ENCODE measurements at regions of chr11 and their contacts with region 1.

Region 1: GRCh38 chr11:134098566-134099184 is 29.8 kb downstream of the JAM3 start:
- DNase-seq: no peak
- ATAC-seq: peak; percentile 98
- H3K4me3 Mint-ChIP-seq: no peak overlapping the region
- H3K27ac Mint-ChIP-seq: 0 out of 2 replicates have a peak overlapping the region, but pooled peaks have one; percentile 50
- H3K4me1 Mint-ChIP-seq: peaks cover 23% of the 10 kb centered on the region
- H3K27me3 Mint-ChIP-seq: peaks cover 8% of the 10 kb centered on the region
- CTCF ChIP-seq: no peak

Region 2: DNA sequence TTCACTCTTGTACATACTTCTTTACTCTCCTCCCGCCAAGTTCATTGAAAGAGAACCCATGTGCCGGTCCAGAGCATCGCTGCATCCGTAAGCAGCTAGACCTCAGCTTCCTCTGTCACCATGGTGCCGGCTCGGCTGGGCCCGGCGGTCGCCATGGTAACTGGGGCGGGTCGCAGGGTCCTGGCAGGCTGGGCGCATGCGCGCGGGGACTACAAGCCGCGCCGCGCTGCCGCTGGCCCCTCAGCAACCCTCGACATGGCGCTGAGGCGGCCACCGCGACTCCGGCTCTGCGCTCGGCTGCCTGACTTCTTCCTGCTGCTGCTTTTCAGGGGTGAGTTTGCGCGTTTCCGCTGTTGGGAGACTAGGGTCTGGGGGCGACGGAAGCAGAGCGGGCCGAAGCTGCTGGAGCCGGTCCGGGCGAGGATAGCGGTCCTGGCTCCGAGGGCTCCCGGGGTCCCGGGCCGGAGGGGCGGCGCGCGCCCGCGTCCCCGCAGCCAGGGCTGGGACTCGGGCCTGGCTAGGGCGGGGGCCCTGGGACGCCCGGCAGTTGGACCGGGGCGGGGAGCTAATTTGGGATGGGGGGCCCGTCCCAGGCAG is 29.7 kb before region 1 on chr11 and contains the start of gene JAM3:
- CTCF ChIA-PET with region 1: interaction called, 15 read pairs
- POLR2A ChIA-PET with region 1: no interaction called
- DNase-seq: peak; percentile 99
- ATAC-seq: peak; percentile 87
- H3K4me3 Mint-ChIP-seq: peak within 1 kb of the TSS; percentile 97
- H3K27ac Mint-ChIP-seq: peak within 1 kb of the TSS; percentile 85; the same call in 1 of the 2 replicates
- H3K4me1 Mint-ChIP-seq: peaks cover 52% of the 10 kb centered on the region
- H3K27me3 Mint-ChIP-seq: peaks cover 30% of the 10 kb centered on the region
- CTCF ChIP-seq: no peak
- total RNA-seq, gene JAM3: 32.7 to 34.1 TPM (median 32.9 TPM) in 3 replicates

Region 3: DNA sequence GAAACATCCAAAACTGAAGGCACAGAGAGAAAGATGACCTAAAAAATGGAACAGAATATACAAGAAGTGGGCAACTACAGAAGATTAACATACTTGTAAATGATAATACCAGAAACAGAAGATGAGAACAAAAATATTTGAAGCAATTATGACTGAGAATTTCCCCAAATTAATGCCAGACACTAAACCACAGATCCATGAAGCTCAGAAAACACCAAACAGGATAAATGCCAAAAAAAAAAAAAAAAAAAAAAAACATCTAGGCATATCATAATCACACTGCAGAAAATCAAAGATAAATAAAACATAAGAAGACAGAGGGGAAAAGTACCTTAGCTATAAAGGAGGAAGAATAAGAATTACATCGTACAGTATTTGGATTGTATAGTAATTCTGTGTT is 35.5 kb after region 1 on chr11:
- CTCF ChIA-PET with region 1: no interaction called
- POLR2A ChIA-PET with region 1: no interaction called
- DNase-seq: no peak
- ATAC-seq: no peak
- H3K4me3 Mint-ChIP-seq: no peak overlapping the region
- H3K27ac Mint-ChIP-seq: no peak overlapping the region
- H3K4me1 Mint-ChIP-seq: peaks cover 5% of the 10 kb centered on the region
- H3K27me3 Mint-ChIP-seq: no peaks in the 10 kb centered on the region
- CTCF ChIP-seq: no peak